ENCODE measurements at regions of chr6 and their contacts with region 1.

Region 1: DNA sequence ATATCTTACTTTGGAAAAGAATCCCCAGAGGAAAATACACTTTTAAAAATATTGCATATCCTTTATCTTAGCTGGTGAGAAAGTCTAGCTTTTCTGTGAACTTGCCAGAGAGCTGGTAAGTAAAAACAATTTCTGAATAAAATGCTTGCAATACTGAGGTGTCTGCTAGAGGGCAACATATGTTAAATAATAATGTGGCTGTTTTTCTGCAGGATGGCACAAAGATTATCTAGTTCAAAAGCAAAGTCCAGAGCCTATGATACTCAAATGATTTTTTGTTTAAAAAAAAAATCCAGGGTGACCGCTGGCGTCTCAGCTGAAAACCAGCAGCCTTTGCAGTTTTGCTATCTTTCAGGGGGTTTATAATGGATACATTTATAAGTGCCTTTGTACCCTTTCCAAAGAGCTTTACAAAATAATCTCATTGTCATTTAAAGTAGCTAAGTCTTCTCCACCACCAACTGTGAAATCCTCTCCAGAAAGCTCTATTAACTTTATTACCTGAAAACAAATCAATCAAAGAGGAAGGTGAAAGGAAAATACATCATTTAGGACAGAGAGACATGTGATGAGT is 194.9 kb downstream of the PHACTR1 start:
- DNase-seq: no peak

Region 2: DNA sequence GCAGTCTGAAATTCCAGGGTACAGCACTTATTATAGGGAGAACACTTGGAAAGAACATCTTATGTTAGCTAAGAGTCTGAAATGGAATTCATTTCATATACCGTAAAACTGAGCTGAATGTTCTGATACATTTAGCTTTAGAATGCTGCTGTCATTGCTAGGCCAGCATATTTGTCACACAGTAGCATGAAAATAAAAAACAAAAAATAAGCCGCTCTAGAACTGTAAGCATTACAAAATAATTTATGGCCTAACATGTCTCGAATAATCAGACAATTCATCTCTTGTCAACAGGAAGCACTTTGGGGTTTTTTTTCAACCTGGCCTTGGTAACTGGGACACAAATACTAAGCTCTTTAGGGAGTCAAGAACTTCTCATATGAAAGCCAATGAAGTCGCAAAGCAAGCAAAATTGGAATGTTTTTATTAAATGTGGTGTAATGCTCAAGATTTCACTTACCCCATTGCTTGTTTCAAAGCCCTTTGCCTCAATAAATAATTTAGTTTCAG is 79.2 kb before region 1 on chr6:
- intact Hi-C with region 1: no loop called
- DNase-seq: no peak

Region 3: GRCh38 chr6:12865671-12866181 is 45.7 kb before region 1 on chr6:
- intact Hi-C with region 1: no loop called
- DNase-seq: no peak

Region 4: DNA sequence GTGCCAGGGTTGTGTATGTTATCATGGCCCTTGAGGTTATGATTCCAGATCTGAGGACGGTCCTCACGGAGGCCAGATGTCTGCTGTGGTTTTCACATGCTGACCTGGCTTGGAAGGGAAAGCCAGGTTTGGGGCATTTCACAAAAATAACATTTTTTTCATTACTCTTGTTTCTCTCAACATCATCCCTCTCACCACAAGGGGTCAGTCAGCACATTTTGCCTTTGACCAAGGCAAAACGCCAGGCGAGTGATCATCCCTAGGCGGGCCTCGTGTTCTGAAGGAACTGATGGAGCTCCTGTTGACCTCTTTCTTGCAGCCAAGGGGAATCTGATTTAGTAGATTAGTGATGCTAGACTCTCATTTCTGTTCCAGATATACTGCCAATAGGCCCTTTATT is 283.4 kb after region 1 on chr6:
- intact Hi-C with region 1: loop called (anchors 5 kb)
- DNase-seq: peak in 7 of 10 donors; percentile 26 to 83 (median 51)

Measured in posterior cingulate gyrus (tissue), 11 donors.